Left ventricle myocardium inferior (tissue), 1 donor: ENCODE measurements at regions of chr1 and their contacts with region 1.

Region 1: DNA sequence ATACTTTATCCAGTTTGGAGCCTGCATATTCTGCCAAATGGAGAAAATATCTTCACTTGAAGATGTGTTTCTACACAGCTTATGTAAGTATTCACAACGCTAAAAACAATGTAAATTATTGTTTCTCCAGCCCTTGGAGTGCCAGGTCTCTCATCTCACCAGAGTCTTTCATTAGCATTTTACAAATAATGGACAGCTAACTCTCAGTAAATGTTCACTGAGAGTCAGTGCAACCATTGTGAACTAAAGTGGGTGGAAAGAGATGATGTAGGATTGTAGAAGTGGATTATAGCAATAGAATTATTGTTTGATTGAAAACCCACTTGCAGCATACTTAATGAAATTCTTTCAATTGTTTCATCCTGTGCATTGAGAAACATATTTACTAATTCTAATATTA is 8.3 kb upstream of the FAM177B start:
- DNase-seq: no peak
- H3K4me3 ChIP-seq: no peak overlapping the region
- H3K27ac ChIP-seq: no peak overlapping the region
- H3K4me1 ChIP-seq: no peaks in the 10 kb centered on the region
- H3K27me3 ChIP-seq: no peaks in the 10 kb centered on the region
- CTCF ChIP-seq: no peak

Region 2: DNA sequence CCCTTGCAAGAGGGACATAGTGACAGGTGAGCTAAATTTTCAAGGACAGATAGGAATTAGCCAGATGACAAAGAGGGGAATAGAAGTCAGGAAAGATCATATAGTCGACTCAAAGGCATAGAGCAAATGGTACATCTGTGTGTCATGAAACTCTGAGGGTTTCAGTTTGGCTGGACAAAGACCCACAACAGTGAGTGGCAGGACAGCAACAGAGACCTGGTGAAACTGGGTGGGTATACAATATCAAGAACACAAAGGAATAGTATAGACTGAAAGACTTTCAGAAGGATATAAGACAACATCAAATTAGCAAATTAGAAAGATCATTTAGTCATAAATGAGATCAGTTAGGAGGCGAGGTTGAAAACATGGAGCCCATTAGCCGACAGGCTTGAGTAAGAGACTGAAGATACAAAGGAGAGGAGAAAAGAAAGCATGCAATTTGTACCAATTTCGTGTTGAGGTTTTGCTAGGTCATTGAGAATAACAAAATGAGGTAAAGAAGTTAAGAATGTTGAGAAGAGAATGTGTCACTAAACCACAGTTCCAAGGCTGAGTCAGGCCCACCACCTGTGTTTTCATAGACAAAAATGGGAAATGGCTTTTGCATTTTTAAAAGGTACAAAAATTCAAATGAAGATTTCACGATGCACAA is 394.6 kb before region 1 on chr1:
- intact Hi-C with region 1: no loop called
- DNase-seq: no peak
- H3K4me3 ChIP-seq: no peak overlapping the region
- H3K27ac ChIP-seq: no peak overlapping the region
- H3K4me1 ChIP-seq: no peaks in the 10 kb centered on the region
- H3K27me3 ChIP-seq: peaks cover 21% of the 10 kb centered on the region
- CTCF ChIP-seq: no peak

Region 3: GRCh38 chr1:222570837-222571236 is 157.9 kb before region 1 on chr1:
- intact Hi-C with region 1: no loop called
- DNase-seq: no peak
- H3K4me3 ChIP-seq: no peak overlapping the region
- H3K27ac ChIP-seq: no peak overlapping the region
- H3K4me1 ChIP-seq: no peaks in the 10 kb centered on the region
- H3K27me3 ChIP-seq: no peaks in the 10 kb centered on the region
- CTCF ChIP-seq: no peak

Region 4: GRCh38 chr1:222654849-222655248 is 73.9 kb before region 1 on chr1:
- intact Hi-C with region 1: loop called (anchors 10 kb)
- DNase-seq: no peak
- H3K4me3 ChIP-seq: no peak overlapping the region
- H3K27ac ChIP-seq: peak overlapping the region; percentile 37
- H3K4me1 ChIP-seq: peaks cover 20% of the 10 kb centered on the region
- H3K27me3 ChIP-seq: no peaks in the 10 kb centered on the region
- CTCF ChIP-seq: no peak

Region 5: GRCh38 chr1:222713091-222713961 is 15.4 kb before region 1 on chr1:
- intact Hi-C with region 1: no loop called
- DNase-seq: peak; percentile 93
- H3K4me3 ChIP-seq: peak overlapping the region; percentile 94
- H3K27ac ChIP-seq: peak overlapping the region; percentile 98
- H3K4me1 ChIP-seq: peaks cover 61% of the 10 kb centered on the region
- H3K27me3 ChIP-seq: no peaks in the 10 kb centered on the region
- CTCF ChIP-seq: no peak